Right lobe of liver (tissue), 6 donors: ENCODE measurements at regions of chr5 and their contacts with region 1.

Region 1: GRCh38 chr5:149452007-149452664 is 73.0 kb upstream of the IL17B start:
- DNase-seq: peak; percentile 59 to 75 (median 69)
- ATAC-seq: peak; percentile 72 to 86 (median 79)
- H3K4me3 ChIP-seq: no peak overlapping the region
- H3K27ac ChIP-seq: peak overlapping the region; percentile 60 to 70 (median 64)
- H3K4me1 ChIP-seq: peaks cover 0 to 4% (median 0%) of the 10 kb centered on the region in 4 donors
- H3K27me3 ChIP-seq: no peaks in the 10 kb centered on the region
- CTCF ChIP-seq: no peak
- POLR2A ChIP-seq: no peak

Region 2: GRCh38 chr5:149551200-149552037 is 99.3 kb after region 1 on chr5 and contains the start of gene CSNK1A1:
- intact Hi-C with region 1: loop called in 1 of 2 experiments (anchors 5 kb)
- DNase-seq: peak; percentile 99
- ATAC-seq: peak; percentile 95 to 99 (median 96)
- H3K4me3 ChIP-seq: peak within 1 kb of the TSS; percentile 88 to 91 (median 89)
- H3K27ac ChIP-seq: peak within 1 kb of the TSS; percentile 92 to 98 (median 97)
- H3K4me1 ChIP-seq: peaks cover 0 to 31% (median 11%) of the 10 kb centered on the region in 4 donors
- H3K27me3 ChIP-seq: no peaks in the 10 kb centered on the region
- CTCF ChIP-seq: peak; percentile 67 to 90 (median 80)
- POLR2A ChIP-seq: peak; percentile 93
- total RNA-seq, gene CSNK1A1: 79.7 to 87.1 (median 83.8) TPM